ENCODE measurements at regions of chr3 and their contacts with region 1.

Region 1: GRCh38 chr3:173045770-173046382 is 95.2 kb downstream of the SPATA16 start:
- DNase-seq: no peak
- ATAC-seq: no peak
- H3K4me3 ChIP-seq: no peak overlapping the region
- H3K27ac ChIP-seq: no peak overlapping the region
- H3K4me1 ChIP-seq: no peaks in the 10 kb centered on the region
- H3K27me3 ChIP-seq: no peaks in the 10 kb centered on the region
- CTCF ChIP-seq: peak in 2 of 3 experiments; percentile 10 to 58; a peak in 3 of 6 replicates
- POLR2A ChIP-seq: no peak
- RAD21 ChIP-seq: peak; percentile 48

Region 2: DNA sequence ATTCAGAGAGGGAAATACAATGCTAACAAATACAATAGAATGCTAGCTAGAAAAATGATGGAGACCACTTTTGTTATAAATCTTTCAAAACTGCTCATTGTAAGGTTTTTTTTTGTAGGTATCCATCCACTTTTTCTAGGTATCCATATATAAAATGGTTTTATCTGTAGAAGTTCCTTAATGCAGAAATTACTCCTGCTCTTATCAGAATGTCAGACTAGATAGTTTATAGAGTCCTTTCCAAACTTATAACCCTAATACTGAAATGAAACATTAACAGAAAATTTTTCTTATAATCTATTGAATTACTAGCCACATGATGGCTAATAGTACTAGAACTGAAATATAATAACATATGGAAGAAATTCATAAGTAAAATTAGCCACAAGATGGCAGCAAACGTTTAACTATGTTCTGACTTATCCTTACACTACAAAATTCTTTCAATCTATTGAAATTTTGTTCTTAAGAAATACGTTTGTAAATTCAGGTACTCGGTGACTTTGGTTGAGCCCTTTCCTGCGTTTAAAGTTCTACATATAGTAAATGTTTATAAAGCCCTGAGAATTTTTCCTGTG is 236.8 kb before region 1 on chr3:
- CTCF ChIA-PET with region 1: no interaction called
- POLR2A ChIA-PET with region 1: no interaction called
- RAD21 ChIA-PET with region 1: no interaction called
- intact Hi-C with region 1: loop called (anchors 1 kb)
- DNase-seq: peak; percentile 21
- ATAC-seq: peak; percentile 53; the same call in 1 of the 2 replicates
- H3K4me3 ChIP-seq: no peak overlapping the region
- H3K27ac ChIP-seq: no peak overlapping the region
- H3K4me1 ChIP-seq: no peaks in the 10 kb centered on the region
- H3K27me3 ChIP-seq: no peaks in the 10 kb centered on the region
- CTCF ChIP-seq: peak; percentile 16 to 55 (median 24); a peak in 3 of 6 replicates
- POLR2A ChIP-seq: no peak
- RAD21 ChIP-seq: peak; percentile 42

Region 3: GRCh38 chr3:172836390-172836997 is 209.4 kb before region 1 on chr3:
- CTCF ChIA-PET with region 1: no interaction called
- POLR2A ChIA-PET with region 1: no interaction called
- RAD21 ChIA-PET with region 1: no interaction called
- intact Hi-C with region 1: loop called (anchors 5 kb)
- DNase-seq: peak; percentile 32
- ATAC-seq: peak; percentile 84
- H3K4me3 ChIP-seq: no peak overlapping the region
- H3K27ac ChIP-seq: no peak overlapping the region
- H3K4me1 ChIP-seq: no peaks in the 10 kb centered on the region
- H3K27me3 ChIP-seq: no peaks in the 10 kb centered on the region; the same call in 1 of the 2 replicates
- CTCF ChIP-seq: peak; percentile 39 to 80 (median 78); a peak in 5 of 6 replicates
- POLR2A ChIP-seq: no peak
- RAD21 ChIP-seq: peak; percentile 62

Region 4: DNA sequence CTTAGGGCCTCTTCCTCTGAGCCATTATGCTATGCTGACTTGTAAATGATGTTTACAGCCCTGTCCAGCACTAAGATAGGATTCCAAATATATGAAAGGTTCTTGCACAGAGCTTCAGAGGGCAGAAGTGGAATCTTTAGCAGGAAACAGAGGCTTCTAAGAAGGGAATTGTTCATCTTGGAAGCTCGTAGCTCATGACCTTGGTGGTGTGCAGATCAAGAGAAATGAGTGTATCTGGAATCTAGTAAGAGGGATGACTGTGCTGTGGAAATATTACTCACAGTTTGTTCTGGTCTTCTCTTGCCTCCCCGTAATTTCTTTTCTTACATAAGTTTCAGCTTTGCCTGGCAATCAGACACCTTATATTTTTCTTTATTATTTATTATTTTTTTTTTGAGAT is 80.6 kb before region 1 on chr3:
- CTCF ChIA-PET with region 1: no interaction called
- POLR2A ChIA-PET with region 1: no interaction called
- RAD21 ChIA-PET with region 1: no interaction called
- intact Hi-C with region 1: no loop called
- DNase-seq: no peak
- ATAC-seq: no peak
- H3K4me3 ChIP-seq: no peak overlapping the region
- H3K27ac ChIP-seq: no peak overlapping the region
- H3K4me1 ChIP-seq: no peaks in the 10 kb centered on the region
- H3K27me3 ChIP-seq: no peaks in the 10 kb centered on the region
- CTCF ChIP-seq: no peak
- POLR2A ChIP-seq: no peak
- RAD21 ChIP-seq: no peak

Region 5: GRCh38 chr3:172982736-172983364 is 63.0 kb before region 1 on chr3:
- CTCF ChIA-PET with region 1: no interaction called
- POLR2A ChIA-PET with region 1: no interaction called
- RAD21 ChIA-PET with region 1: no interaction called
- intact Hi-C with region 1: loop called (anchors 1 kb)
- DNase-seq: peak; percentile 7
- ATAC-seq: peak; percentile 63; the same call in 1 of the 2 replicates
- H3K4me3 ChIP-seq: no peak overlapping the region
- H3K27ac ChIP-seq: no peak overlapping the region
- H3K4me1 ChIP-seq: no peaks in the 10 kb centered on the region
- H3K27me3 ChIP-seq: no peaks in the 10 kb centered on the region
- CTCF ChIP-seq: peak; percentile 6 to 48 (median 33); a peak in 3 of 6 replicates
- POLR2A ChIP-seq: no peak
- RAD21 ChIP-seq: peak; percentile 66

Region 6: DNA sequence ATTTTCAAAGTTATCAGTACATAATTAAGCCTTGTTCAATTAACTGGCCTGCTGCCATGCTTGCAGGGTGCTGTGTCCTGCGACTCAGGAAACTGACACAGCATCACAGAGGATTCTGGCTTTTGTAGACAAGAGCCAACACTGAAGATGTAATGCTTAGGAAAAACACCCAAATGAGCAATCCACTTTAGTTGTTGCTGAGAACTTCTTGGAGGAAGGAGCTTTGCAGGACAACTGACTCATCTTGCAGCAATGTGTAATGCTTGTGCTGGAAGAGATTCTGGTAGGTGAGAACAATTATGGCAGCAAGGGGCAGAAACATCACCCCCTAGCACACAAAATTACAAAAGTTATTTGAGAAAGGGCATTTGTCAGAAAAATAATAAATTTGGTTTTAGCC is 419.2 kb after region 1 on chr3:
- CTCF ChIA-PET with region 1: no interaction called
- POLR2A ChIA-PET with region 1: no interaction called
- RAD21 ChIA-PET with region 1: no interaction called
- intact Hi-C with region 1: no loop called
- DNase-seq: no peak
- ATAC-seq: no peak
- H3K4me3 ChIP-seq: no peak overlapping the region
- H3K27ac ChIP-seq: no peak overlapping the region
- H3K4me1 ChIP-seq: no peaks in the 10 kb centered on the region
- H3K27me3 ChIP-seq: no peaks in the 10 kb centered on the region
- CTCF ChIP-seq: no peak
- POLR2A ChIP-seq: no peak
- RAD21 ChIP-seq: no peak

Measured in HCT116 (cell line).